GM12878 (cell line): ENCODE measurements at regions of chr10 and their contacts with region 1.

Region 1: GRCh38 chr10:75612904-75613684 is 181.7 kb downstream of the LRMDA start:
- DNase-seq: peak; percentile 50
- ATAC-seq: peak; percentile 43
- H3K4me3 ChIP-seq: no peak overlapping the region
- H3K27ac ChIP-seq: peak overlapping the region; percentile 5; the same call in 1 of the 2 replicates
- H3K4me1 ChIP-seq: peaks cover 12% of the 10 kb centered on the region
- H3K27me3 ChIP-seq: no peaks in the 10 kb centered on the region
- CTCF ChIP-seq: no peak
- EP300 ChIP-seq: peak in 1 of 2 experiments; percentile 53; a peak in 1 of 4 replicates
- POLR2A ChIP-seq: no peak
- RAD21 ChIP-seq: no peak

Region 2: GRCh38 chr10:75469006-75469616 is 144.0 kb before region 1 on chr10:
- CTCF ChIA-PET with region 1: no interaction called
- POLR2A ChIA-PET with region 1: no interaction called
- RAD21 ChIA-PET with region 1: no interaction called
- SMC1A ChIA-PET with region 1: no interaction called
- in situ Hi-C with region 1: no loop called
- intact Hi-C with region 1: no loop called
- DNase-seq: no peak
- ATAC-seq: no peak
- H3K4me3 ChIP-seq: no peak overlapping the region
- H3K27ac ChIP-seq: no peak overlapping the region
- H3K4me1 ChIP-seq: no peaks in the 10 kb centered on the region
- H3K27me3 ChIP-seq: peaks cover 0 to 1% of the 10 kb centered on the region in 2 experiments; a peak in 2 of 4 replicates
- CTCF ChIP-seq: no peak
- EP300 ChIP-seq: no peak
- POLR2A ChIP-seq: no peak
- RAD21 ChIP-seq: no peak

Region 3: GRCh38 chr10:75508239-75508813 is 104.8 kb before region 1 on chr10:
- CTCF ChIA-PET with region 1: no interaction called
- POLR2A ChIA-PET with region 1: no interaction called
- RAD21 ChIA-PET with region 1: interaction called, 9 read pairs
- SMC1A ChIA-PET with region 1: interaction called, 5 read pairs
- in situ Hi-C with region 1: no loop called
- intact Hi-C with region 1: loop called (anchors 2 kb)
- DNase-seq: no peak
- ATAC-seq: no peak
- H3K4me3 ChIP-seq: no peak overlapping the region
- H3K27ac ChIP-seq: no peak overlapping the region
- H3K4me1 ChIP-seq: peaks cover 12% of the 10 kb centered on the region
- H3K27me3 ChIP-seq: peaks cover 0 to 2% of the 10 kb centered on the region in 2 experiments; a peak in 1 of 4 replicates
- CTCF ChIP-seq: no peak
- EP300 ChIP-seq: no peak
- POLR2A ChIP-seq: no peak
- RAD21 ChIP-seq: no peak

Region 4: GRCh38 chr10:75547391-75548298 is 65.4 kb before region 1 on chr10:
- CTCF ChIA-PET with region 1: interaction called, 3 read pairs
- POLR2A ChIA-PET with region 1: no interaction called
- RAD21 ChIA-PET with region 1: interaction called, 5 read pairs
- SMC1A ChIA-PET with region 1: interaction called, 30 read pairs
- in situ Hi-C with region 1: no loop called
- intact Hi-C with region 1: no loop called
- DNase-seq: peak; percentile 33
- ATAC-seq: peak; percentile 95
- H3K4me3 ChIP-seq: no peak overlapping the region
- H3K27ac ChIP-seq: no peak overlapping the region
- H3K4me1 ChIP-seq: no peaks in the 10 kb centered on the region
- H3K27me3 ChIP-seq: no peaks in the 10 kb centered on the region
- CTCF ChIP-seq: no peak
- EP300 ChIP-seq: 0 out of 4 replicates have a peak, but pooled peaks of 1 of the 2 experiments have one; percentile 13
- POLR2A ChIP-seq: no peak
- RAD21 ChIP-seq: no peak

Region 5: GRCh38 chr10:75599875-75600648 is 13.0 kb before region 1 on chr10:
- CTCF ChIA-PET with region 1: interaction called, 5 read pairs
- POLR2A ChIA-PET with region 1: interaction called, 6 read pairs
- RAD21 ChIA-PET with region 1: interaction called, 5 read pairs
- SMC1A ChIA-PET with region 1: interaction called, 22 read pairs
- in situ Hi-C with region 1: no loop called
- intact Hi-C with region 1: no loop called
- DNase-seq: no peak
- ATAC-seq: no peak
- H3K4me3 ChIP-seq: no peak overlapping the region
- H3K27ac ChIP-seq: no peak overlapping the region
- H3K4me1 ChIP-seq: no peaks in the 10 kb centered on the region
- H3K27me3 ChIP-seq: no peaks in the 10 kb centered on the region
- CTCF ChIP-seq: no peak
- EP300 ChIP-seq: no peak
- POLR2A ChIP-seq: no peak
- RAD21 ChIP-seq: no peak

Region 6: GRCh38 chr10:75708060-75708459 is 95.0 kb after region 1 on chr10:
- CTCF ChIA-PET with region 1: no interaction called
- POLR2A ChIA-PET with region 1: no interaction called
- RAD21 ChIA-PET with region 1: no interaction called
- SMC1A ChIA-PET with region 1: no interaction called
- in situ Hi-C with region 1: no loop called
- intact Hi-C with region 1: no loop called
- DNase-seq: no peak
- ATAC-seq: no peak
- H3K4me3 ChIP-seq: no peak overlapping the region
- H3K27ac ChIP-seq: no peak overlapping the region
- H3K4me1 ChIP-seq: no peaks in the 10 kb centered on the region
- H3K27me3 ChIP-seq: no peaks in the 10 kb centered on the region; a peak in 2 of 4 replicates
- CTCF ChIP-seq: no peak
- EP300 ChIP-seq: no peak
- POLR2A ChIP-seq: no peak
- RAD21 ChIP-seq: no peak